Activated B cell treated with CpG ODN at 0.5 μM for 24 hours (primary cell): ENCODE measurements at regions of chr2 and their contacts with region 1.

Region 1: DNA sequence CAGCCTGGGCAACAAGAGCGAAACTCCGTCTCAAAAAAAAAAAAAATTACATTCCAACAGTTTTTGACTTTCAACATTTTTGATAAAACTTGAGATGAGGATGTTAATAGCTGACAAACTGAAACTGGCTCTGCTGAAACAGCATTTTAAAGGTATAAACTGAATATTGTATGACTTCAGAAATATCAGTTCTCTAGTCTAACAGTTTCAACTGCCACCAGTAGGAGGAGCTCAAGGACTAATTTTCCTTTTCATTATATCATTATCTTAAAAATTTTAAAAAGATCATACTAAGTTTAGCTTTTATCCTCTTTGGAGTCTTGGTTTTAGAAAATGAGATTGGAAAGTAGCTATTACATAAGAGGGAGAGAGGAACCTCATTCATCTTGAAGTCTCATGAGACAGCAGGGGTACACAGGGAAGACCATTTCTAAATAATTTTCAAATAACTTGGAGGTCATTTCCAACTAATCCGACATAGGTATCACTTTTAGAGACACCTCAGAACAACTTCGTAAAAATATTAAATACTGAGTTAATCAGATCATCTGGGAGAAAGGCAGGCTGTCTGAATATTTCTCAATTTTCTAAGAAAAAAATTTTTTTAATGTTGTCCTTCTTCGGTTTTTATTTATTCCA is 37.6 kb upstream of the MCM6 start:
- DNase-seq: no peak
- ATAC-seq: peak; percentile 64
- H3K4me3 Mint-ChIP-seq: no peak overlapping the region
- H3K27ac Mint-ChIP-seq: no peak overlapping the region
- H3K4me1 Mint-ChIP-seq: peaks cover 6% of the 10 kb centered on the region
- H3K27me3 Mint-ChIP-seq: no peaks in the 10 kb centered on the region
- CTCF ChIP-seq: peak; percentile 87

Region 2: DNA sequence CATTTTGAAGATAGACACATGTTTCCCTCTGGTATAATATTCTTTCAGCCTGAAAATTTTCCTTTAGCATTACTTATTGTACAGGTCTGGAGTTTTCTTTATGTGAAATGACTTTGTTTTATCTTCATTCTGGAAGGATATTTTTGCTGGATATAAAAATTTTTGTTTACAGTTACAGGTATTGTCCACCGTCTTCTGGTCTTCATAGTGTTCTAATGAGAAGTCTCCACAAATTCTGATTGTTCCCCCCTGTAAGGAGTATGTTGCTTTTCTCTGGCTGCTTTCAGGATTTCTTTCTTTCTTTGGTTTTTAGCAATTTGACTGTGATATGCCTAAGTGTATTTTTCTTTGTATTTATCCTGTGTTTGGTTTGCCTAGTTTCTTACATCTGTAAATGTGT is 157.2 kb before region 1 on chr2:
- CTCF ChIA-PET with region 1: no interaction called
- POLR2A ChIA-PET with region 1: no interaction called
- intact Hi-C with region 1: no loop called
- DNase-seq: no peak
- ATAC-seq: no peak
- H3K4me3 Mint-ChIP-seq: no peak overlapping the region
- H3K27ac Mint-ChIP-seq: no peak overlapping the region
- H3K4me1 Mint-ChIP-seq: no peaks in the 10 kb centered on the region
- H3K27me3 Mint-ChIP-seq: no peaks in the 10 kb centered on the region
- CTCF ChIP-seq: no peak

Region 3: GRCh38 chr2:136246086-136246669 is 332.3 kb after region 1 on chr2:
- CTCF ChIA-PET with region 1: no interaction called
- POLR2A ChIA-PET with region 1: no interaction called
- intact Hi-C with region 1: loop called (anchors 5 kb)
- DNase-seq: no peak
- ATAC-seq: peak; percentile 86
- H3K4me3 Mint-ChIP-seq: peak overlapping the region; percentile 35
- H3K27ac Mint-ChIP-seq: peak overlapping the region; percentile 76
- H3K4me1 Mint-ChIP-seq: peaks cover 65% of the 10 kb centered on the region
- H3K27me3 Mint-ChIP-seq: no peaks in the 10 kb centered on the region
- CTCF ChIP-seq: no peak

Region 4: DNA sequence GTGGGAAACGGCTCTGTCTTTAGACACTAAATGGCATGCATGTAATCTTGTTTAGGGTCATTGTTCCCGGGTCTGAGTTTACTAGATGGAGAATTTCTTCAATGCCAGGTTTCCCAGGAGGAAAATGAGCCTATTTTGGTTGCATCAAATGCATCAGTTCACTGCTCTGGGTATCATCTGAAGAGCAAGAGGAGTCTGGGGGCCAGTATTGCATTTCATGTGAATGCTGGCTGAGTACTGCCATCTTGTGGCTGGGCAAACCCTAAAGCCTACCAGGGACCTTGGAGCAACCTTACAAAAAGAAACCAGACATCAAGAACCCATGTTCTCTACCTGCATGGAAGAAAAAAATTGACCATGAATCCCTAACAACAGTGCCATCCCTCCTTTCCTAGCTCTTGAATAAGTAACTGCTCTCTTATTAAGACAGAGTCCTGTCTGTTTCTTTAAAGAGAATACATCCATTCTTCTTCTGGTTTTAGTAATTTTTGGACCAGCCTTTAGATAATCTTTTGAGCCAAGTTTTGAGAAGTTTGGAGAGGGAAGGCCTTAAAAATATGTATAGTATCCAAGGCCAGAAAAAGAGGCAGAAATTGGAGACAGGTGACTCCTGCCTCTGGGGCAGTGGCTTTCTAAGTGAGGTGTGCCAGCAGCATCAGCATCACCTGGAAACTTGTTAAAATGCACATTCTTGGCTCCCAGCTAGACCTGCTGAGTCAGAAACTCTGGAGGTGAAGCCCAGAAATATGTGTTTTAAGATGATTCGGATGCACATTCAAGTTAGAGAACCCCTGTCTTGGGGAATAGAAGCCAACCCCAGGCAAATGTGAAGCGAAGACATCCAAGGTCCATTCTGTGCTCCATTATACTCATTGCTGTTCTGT is 465.1 kb after region 1 on chr2:
- CTCF ChIA-PET with region 1: interaction called, 298 read pairs
- POLR2A ChIA-PET with region 1: interaction called, 17 read pairs
- intact Hi-C with region 1: loop called (anchors 1 kb)
- DNase-seq: no peak
- ATAC-seq: peak; percentile 40
- H3K4me3 Mint-ChIP-seq: no peak overlapping the region
- H3K27ac Mint-ChIP-seq: peak overlapping the region; percentile 92
- H3K4me1 Mint-ChIP-seq: peaks cover 81% of the 10 kb centered on the region
- H3K27me3 Mint-ChIP-seq: no peaks in the 10 kb centered on the region
- CTCF ChIP-seq: peak; percentile 44

Region 5: GRCh38 chr2:136394136-136395060 is 480.6 kb after region 1 on chr2:
- CTCF ChIA-PET with region 1: interaction called, 10 read pairs
- POLR2A ChIA-PET with region 1: no interaction called
- intact Hi-C with region 1: no loop called
- DNase-seq: no peak
- ATAC-seq: peak; percentile 41
- H3K4me3 Mint-ChIP-seq: peak overlapping the region; percentile 11
- H3K27ac Mint-ChIP-seq: peak overlapping the region; percentile 69
- H3K4me1 Mint-ChIP-seq: peaks cover 63% of the 10 kb centered on the region
- H3K27me3 Mint-ChIP-seq: no peaks in the 10 kb centered on the region
- CTCF ChIP-seq: no peak

Region 6: GRCh38 chr2:136423516-136423996 is 509.7 kb after region 1 on chr2:
- CTCF ChIA-PET with region 1: interaction called, 11 read pairs
- POLR2A ChIA-PET with region 1: no interaction called
- intact Hi-C with region 1: loop called (anchors 1 kb)
- DNase-seq: peak; percentile 70
- ATAC-seq: peak; percentile 99
- H3K4me3 Mint-ChIP-seq: peak overlapping the region; percentile 88
- H3K27ac Mint-ChIP-seq: peak overlapping the region; percentile 2
- H3K4me1 Mint-ChIP-seq: peaks cover 12% of the 10 kb centered on the region
- H3K27me3 Mint-ChIP-seq: peaks cover 23% of the 10 kb centered on the region
- CTCF ChIP-seq: no peak

Region 7: DNA sequence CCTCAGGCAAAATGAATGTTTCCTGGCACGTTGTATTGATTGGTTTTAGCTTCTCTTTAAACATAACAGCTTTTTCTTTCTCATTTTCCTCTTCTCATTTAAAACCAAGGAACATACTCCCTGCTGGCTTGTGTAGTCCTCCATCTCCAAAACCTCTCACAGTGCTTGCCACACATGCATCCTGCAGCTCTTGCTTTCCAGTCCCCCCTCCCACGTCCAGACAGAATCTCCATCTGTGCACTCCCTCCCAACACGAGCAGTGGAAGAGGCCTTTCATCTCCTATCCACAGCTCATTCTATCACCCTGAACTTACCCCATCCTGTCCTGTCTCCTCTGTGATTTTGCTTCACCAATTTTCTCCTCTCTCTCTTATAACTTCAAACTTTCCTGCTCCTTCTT is 751.9 kb after region 1 on chr2:
- CTCF ChIA-PET with region 1: no interaction called
- POLR2A ChIA-PET with region 1: no interaction called
- intact Hi-C with region 1: loop called (anchors 10 kb)
- DNase-seq: no peak
- ATAC-seq: no peak
- H3K4me3 Mint-ChIP-seq: no peak overlapping the region
- H3K27ac Mint-ChIP-seq: no peak overlapping the region
- H3K4me1 Mint-ChIP-seq: no peaks in the 10 kb centered on the region
- H3K27me3 Mint-ChIP-seq: no peaks in the 10 kb centered on the region
- CTCF ChIP-seq: no peak

Region 8: GRCh38 chr2:136738044-136738443 is 824.2 kb after region 1 on chr2:
- CTCF ChIA-PET with region 1: interaction called, 5 read pairs
- POLR2A ChIA-PET with region 1: no interaction called
- intact Hi-C with region 1: loop called (anchors 10 kb)
- DNase-seq: no peak
- ATAC-seq: no peak
- H3K4me3 Mint-ChIP-seq: no peak overlapping the region
- H3K27ac Mint-ChIP-seq: no peak overlapping the region
- H3K4me1 Mint-ChIP-seq: no peaks in the 10 kb centered on the region
- H3K27me3 Mint-ChIP-seq: peaks cover 13% of the 10 kb centered on the region
- CTCF ChIP-seq: no peak